CD4-positive, alpha-beta T cell (primary cell): ENCODE measurements at regions of chr7 and their contacts with region 1.

Region 1: DNA sequence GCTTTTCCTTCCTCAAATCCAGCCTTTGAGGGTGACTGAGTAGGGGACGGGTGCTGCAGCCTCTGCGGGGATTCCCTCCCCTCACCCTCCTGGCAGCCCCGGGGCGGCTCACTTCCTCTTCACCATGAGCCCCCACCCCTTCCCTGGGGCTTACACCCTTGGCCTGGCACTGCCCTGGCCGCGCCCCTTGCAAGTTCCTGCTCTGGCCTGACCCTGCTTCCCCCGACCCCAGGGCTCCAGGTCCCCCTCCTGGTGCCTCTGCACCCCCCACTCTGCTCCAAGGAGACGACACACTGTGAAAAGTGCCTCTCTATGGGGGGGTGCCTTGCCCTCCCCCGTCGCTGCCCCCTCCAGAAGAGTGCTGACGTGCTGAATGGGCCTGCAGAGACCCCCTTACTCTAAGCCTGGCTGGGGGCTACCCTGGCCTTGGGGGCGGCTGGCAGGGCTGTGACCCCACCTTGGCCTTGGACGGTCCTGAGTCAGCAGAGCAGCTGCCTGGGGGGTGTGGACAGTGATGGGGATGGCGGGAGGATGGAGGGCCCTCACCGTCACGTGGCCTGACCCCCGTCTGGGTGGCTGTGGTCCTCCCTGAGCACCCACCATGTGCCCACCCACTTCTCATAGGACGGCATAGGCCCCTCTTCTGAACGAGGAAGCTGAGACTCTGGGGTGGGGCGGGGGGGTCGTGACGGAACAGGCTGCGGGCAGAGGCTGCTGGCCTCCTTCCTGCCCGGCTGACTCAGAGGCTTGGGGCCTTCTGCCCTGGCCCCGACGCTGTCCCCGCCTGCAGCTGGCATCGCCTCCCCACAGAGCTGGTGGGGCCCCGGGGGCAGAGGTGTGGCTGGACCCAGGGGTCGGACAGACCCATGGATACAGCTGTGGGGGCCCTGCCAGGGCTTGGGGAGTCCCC is 9.8 kb downstream of the LFNG start:
- DNase-seq: peak in 11 of 14 experiments; percentile 44 to 87 (median 60)
- ATAC-seq: peak; percentile 27
- H3K4me3 ChIP-seq: peak overlapping the region; percentile 35
- H3K4me3 Mint-ChIP-seq: peak overlapping the region; percentile 84
- H3K27ac ChIP-seq: peak overlapping the region; percentile 88 to 98
- H3K27ac Mint-ChIP-seq: peak overlapping the region; percentile 98
- H3K4me1 ChIP-seq: peaks cover 71% of the 10 kb centered on the region
- H3K4me1 Mint-ChIP-seq: peaks cover 54% of the 10 kb centered on the region
- H3K27me3 ChIP-seq: no peaks in the 10 kb centered on the region
- H3K27me3 Mint-ChIP-seq: no peaks in the 10 kb centered on the region
- CTCF ChIP-seq: no peak

Region 2: DNA sequence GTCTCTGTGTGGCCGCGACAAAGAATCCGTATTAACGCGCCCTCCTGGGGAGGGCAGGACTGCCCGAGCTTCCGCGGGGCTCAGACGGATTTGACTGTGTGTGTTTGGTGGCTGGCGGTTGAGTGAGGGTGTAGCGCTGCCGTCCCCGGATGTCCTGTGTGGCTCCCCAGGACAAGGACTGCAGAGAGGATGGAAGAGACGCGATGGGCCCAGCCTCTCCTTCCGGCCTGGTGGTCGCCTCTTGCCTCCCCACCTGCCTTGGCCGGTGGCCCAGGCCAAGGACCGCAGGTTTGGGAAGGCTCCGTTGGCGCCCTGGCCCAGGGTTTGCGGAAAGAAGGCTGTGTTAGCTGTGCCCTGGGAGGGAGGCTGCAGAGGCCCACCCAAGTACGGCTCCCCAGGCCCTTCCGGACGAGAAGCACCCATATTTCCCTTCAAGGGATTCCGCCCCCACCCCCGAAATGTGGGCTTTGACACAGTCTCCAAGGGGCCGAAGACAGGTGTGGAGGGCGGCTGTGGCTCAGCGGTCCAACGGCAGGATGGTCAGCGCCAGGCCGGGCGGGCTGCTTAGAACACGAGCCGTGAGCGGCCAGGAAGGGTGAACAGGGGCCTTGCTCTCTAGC is 1294.4 kb before region 1 on chr7:
- CTCF ChIA-PET with region 1: no interaction called
- POLR2A ChIA-PET with region 1: no interaction called
- intact Hi-C with region 1: loop called in 1 of 2 experiments (anchors 10 kb)
- DNase-seq: peak in 2 of 14 experiments; percentile 24 to 38
- ATAC-seq: no peak
- H3K4me3 ChIP-seq: no peak overlapping the region
- H3K4me3 Mint-ChIP-seq: peak overlapping the region; percentile 43
- H3K27ac ChIP-seq: no peak overlapping the region
- H3K27ac Mint-ChIP-seq: peak overlapping the region; percentile 61
- H3K4me1 ChIP-seq: peaks cover 48% of the 10 kb centered on the region
- H3K4me1 Mint-ChIP-seq: peaks cover 33% of the 10 kb centered on the region
- H3K27me3 ChIP-seq: peaks cover 70 to 78% of the 10 kb centered on the region in 2 experiments
- H3K27me3 Mint-ChIP-seq: peaks cover 68% of the 10 kb centered on the region
- CTCF ChIP-seq: no peak

Region 3: GRCh38 chr7:2321020-2321419 is 208.4 kb before region 1 on chr7:
- CTCF ChIA-PET with region 1: no interaction called
- POLR2A ChIA-PET with region 1: no interaction called
- intact Hi-C with region 1: no loop called
- DNase-seq: no peak
- ATAC-seq: no peak
- H3K4me3 ChIP-seq: no peak overlapping the region
- H3K4me3 Mint-ChIP-seq: no peak overlapping the region
- H3K27ac ChIP-seq: no peak overlapping the region
- H3K27ac Mint-ChIP-seq: no peak overlapping the region
- H3K4me1 ChIP-seq: no peaks in the 10 kb centered on the region
- H3K4me1 Mint-ChIP-seq: no peaks in the 10 kb centered on the region
- H3K27me3 ChIP-seq: no peaks in the 10 kb centered on the region
- H3K27me3 Mint-ChIP-seq: no peaks in the 10 kb centered on the region
- CTCF ChIP-seq: no peak

Region 4: DNA sequence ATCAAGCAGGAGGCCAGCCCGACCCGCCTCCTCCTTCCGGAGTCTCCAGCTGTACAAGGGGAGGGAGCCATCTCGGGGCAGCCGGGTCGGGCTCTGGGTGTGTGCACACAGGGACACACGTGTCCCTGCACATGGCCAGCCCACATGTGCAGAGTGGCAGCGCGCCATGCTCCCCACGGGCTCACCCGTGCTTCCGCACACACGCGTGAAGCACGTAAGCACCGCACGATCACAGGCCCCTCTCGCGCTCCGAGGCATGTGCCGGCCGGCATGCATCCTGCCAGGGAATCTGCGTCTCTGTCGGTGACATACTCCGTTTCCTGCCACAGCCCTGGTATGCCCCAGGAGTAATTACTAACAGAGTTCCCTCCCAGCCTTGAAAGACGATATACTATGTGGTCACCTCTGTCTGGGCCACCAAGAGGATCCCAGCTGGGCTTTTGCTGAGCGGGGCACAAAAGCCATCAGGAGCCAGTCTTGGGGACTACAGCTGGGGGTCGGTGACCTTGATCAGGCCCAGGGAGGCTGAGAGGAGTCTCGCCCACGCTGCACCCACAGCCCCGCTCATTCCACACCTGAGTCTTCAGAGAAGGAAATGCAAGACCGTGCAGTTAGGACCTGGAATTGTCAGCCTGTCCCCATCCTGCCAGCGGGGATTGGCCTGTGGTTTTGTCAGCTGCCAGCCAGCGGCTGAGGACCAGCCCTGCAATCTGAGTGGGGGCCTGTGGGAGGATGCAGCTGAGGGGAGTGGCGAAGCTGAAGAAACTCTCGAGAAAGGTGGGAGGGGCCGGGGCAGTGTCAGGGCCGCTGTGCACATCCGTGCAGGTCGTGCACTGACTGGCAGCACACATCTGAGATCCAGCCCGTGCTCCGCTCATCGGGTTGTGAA is 20.8 kb before region 1 on chr7:
- CTCF ChIA-PET with region 1: no interaction called
- POLR2A ChIA-PET with region 1: interaction called, 218 read pairs
- intact Hi-C with region 1: loop called in 1 of 2 experiments (anchors 2 kb)
- DNase-seq: peak; percentile 71 to 95 (median 84)
- ATAC-seq: peak; percentile 73
- H3K4me3 ChIP-seq: peak overlapping the region; percentile 47
- H3K4me3 Mint-ChIP-seq: peak overlapping the region; percentile 78
- H3K27ac ChIP-seq: peak overlapping the region; percentile 84 to 97
- H3K27ac Mint-ChIP-seq: peak overlapping the region; percentile 98
- H3K4me1 ChIP-seq: peaks cover 70% of the 10 kb centered on the region
- H3K4me1 Mint-ChIP-seq: peaks cover 68% of the 10 kb centered on the region
- H3K27me3 ChIP-seq: no peaks in the 10 kb centered on the region
- H3K27me3 Mint-ChIP-seq: no peaks in the 10 kb centered on the region
- CTCF ChIP-seq: no peak